Motor neuron (in vitro differentiated cells): ENCODE measurements at regions of chr13 and their contacts with region 1.

Region 1: DNA sequence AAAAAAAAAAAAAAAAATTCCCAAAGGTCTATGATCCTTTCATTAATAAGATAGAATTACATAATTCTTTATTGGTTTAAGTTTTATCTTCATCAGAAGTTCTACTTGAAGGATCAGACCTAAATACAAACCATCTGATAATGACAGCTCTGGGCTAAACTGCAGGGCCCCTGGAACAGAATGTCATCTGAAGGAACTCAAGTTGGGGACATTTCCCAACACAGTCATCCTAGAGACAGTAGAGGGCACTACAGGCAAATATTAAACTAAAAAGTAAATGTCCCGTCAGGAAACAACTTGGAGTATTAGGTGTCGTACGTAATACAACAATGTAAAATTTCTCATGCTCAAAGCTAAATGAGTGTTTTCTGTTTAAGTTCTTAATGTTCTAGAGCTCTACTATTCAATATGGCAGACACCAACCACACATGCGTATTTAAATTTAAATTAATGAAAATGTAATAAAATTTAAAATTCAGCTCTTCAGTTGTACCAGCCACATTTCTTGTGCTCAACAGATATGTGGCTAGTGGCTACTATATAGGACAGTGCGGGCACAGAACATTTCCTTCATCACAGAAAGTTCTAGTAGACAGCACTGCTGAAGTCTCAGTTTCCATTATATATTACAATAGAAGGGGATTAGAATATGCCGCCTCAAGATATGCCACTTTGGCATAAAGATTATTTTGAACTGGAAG is 21.8 kb upstream of the NAXD start:
- ATAC-seq: peak; percentile 41 to 92 (median 62)
- H3K4me3 ChIP-seq: no peak overlapping the region
- H3K27ac ChIP-seq: no peak overlapping the region
- H3K4me1 ChIP-seq: peaks cover 0 to 4% of the 10 kb centered on the region in 2 donors

Region 2: GRCh38 chr13:110819203-110820014 is 225.8 kb after region 1 on chr13:
- in situ Hi-C with region 1: loop called in 1 of 9 experiments (anchors 25 kb)
- ATAC-seq: peak; percentile 82 to 100 (median 90)
- H3K4me3 ChIP-seq: no peak overlapping the region
- H3K27ac ChIP-seq: no peak overlapping the region
- H3K4me1 ChIP-seq: peaks cover 0 to 2% of the 10 kb centered on the region in 2 donors